ENCODE measurements at regions of chr12 and their contacts with region 1.

Region 1: GRCh38 chr12:6533923-6534694 is at the start of gene GAPDH:
- DNase-seq: peak; percentile 95 to 97 (median 95)
- ATAC-seq: peak; percentile 74 to 83 (median 78)
- H3K4me3 ChIP-seq: peak within 1 kb of the TSS; percentile 64 to 100 (median 90)
- H3K27ac ChIP-seq: peak within 1 kb of the TSS; percentile 90 to 100 (median 96)
- H3K4me1 ChIP-seq: peaks cover 0 to 57% (median 45%) of the 10 kb centered on the region in 12 donors
- H3K27me3 ChIP-seq: no peaks in the 10 kb centered on the region
- CTCF ChIP-seq: no peak
- POLR2A ChIP-seq: peak in 1 of 2 donors; percentile 94
- total RNA-seq, gene GAPDH: 3,379 to 7,430 (median 4,887) TPM

Region 2: GRCh38 chr12:6407236-6407954 is 126.7 kb before region 1 on chr12:
- intact Hi-C with region 1: no loop called
- DNase-seq: no peak
- ATAC-seq: no peak
- H3K4me3 ChIP-seq: no peak overlapping the region
- H3K27ac ChIP-seq: no peak overlapping the region
- H3K4me1 ChIP-seq: no peaks in the 10 kb centered on the region
- H3K27me3 ChIP-seq: no peaks in the 10 kb centered on the region
- CTCF ChIP-seq: no peak
- POLR2A ChIP-seq: no peak

Region 3: DNA sequence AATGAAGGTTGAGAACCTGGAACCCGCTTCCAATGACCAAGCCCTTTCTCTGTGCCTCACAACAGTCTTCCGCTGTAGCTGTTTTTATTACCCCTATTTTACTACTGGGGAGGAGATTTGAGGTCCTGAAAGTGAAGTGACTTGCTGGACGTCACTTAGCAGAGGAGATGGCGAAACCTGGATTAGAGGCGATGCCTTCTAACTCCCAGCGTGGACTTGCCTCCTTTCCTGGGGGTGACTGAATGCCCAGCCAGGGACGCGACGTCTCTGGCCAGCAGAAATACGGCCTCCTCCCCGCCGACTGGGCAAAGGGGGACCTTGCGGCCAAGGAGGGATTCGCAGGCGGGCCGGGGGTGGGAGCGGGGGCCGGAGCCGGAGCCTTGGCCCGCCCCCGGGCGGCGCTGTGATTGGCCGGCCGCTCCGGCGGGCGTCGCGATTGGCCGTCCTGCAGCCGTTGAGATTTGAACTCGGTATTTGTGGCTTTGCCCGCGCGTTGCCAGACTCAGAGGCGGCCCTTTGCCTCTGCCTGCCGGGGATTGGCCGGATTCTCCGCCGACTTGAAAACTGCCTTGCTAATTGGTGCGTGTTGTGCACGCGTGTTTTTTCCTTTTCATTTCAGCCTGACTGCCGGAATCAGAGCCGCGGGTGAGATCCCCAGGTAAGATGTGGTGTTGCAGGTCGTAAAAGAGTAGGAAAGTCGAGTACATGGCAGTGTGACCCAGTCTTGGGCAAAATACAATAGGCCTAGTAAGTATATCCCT is 40.4 kb before region 1 on chr12 and contains the start of gene NCAPD2:
- intact Hi-C with region 1: loop called in 8 of 10 experiments (anchors 1 to 5 kb)
- DNase-seq: peak; percentile 93 to 97 (median 96)
- ATAC-seq: peak; percentile 92 to 96 (median 96)
- H3K4me3 ChIP-seq: peak within 1 kb of the TSS; percentile 42 to 94 (median 86)
- H3K27ac ChIP-seq: peak within 1 kb of the TSS; percentile 86 to 99 (median 98)
- H3K4me1 ChIP-seq: peaks cover 0 to 30% (median 20%) of the 10 kb centered on the region in 12 donors
- H3K27me3 ChIP-seq: no peaks in the 10 kb centered on the region
- CTCF ChIP-seq: peak in 10 of 12 donors; percentile 8 to 49 (median 30)
- POLR2A ChIP-seq: peak in 1 of 2 donors; percentile 64
- total RNA-seq, gene NCAPD2: 8.4 to 22.4 (median 11.3) TPM

Region 4: GRCh38 chr12:6554168-6555017 is 20.3 kb after region 1 on chr12:
- intact Hi-C with region 1: loop called in 4 of 10 experiments (anchors 2 kb)
- DNase-seq: peak; percentile 79 to 89 (median 86)
- ATAC-seq: peak; percentile 24 to 51 (median 39)
- H3K4me3 ChIP-seq: peak overlapping the region; percentile 87 to 98 (median 93)
- H3K27ac ChIP-seq: peak overlapping the region; percentile 31 to 96 (median 90)
- H3K4me1 ChIP-seq: peaks cover 6 to 75% (median 62%) of the 10 kb centered on the region in 12 donors
- H3K27me3 ChIP-seq: no peaks in the 10 kb centered on the region
- CTCF ChIP-seq: peak; percentile 37 to 77 (median 64)
- POLR2A ChIP-seq: no peak

Measured in heart left ventricle (tissue), 16 donors.